HAP-1 (cell line): ENCODE measurements at regions of chr14 and their contacts with region 1.

Region 1: DNA sequence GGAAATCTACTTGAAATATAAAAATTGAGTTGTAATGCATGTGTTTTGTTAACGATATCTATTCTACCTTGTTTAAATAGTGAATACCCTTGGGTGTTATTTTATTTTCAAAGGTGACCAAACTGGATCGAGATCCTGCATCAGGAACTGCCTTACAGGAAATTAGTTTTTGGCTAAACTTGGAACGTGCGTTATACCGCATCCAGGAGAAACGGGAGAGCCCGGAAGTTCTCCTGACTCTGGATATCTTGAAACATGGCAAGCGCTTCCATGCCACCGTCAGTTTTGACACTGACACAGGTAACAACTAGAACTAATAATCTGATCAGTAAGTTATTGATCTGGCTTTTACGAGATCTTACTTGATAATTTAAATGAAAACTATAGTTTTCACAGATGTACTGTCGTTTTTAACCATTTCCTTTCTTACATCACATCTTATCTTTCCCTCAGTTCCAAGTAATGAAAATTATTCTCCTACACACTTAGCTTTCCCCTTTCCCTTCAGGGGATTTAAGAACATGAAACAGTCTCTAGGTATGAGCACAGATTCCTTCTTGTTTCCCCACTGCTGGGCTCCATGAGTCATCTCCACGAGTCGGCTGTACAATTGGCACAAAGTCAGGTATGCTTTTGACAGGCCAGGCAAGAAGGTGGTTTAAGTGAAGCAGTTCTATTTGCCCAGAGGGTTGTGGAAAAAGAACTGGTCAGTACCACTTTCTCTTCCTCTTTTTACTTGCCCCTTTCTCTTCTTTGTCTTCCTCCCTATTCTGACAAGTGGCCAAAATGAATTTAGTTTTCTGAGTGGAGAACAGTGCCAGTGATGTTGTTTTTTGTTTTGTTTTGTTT is 16.1 kb downstream of the DYNC1H1 start:
- DNase-seq: no peak
- H3K4me3 ChIP-seq: no peak overlapping the region
- H3K4me1 ChIP-seq: peaks cover 14% of the 10 kb centered on the region
- H3K27me3 ChIP-seq: no peaks in the 10 kb centered on the region

Region 2: DNA sequence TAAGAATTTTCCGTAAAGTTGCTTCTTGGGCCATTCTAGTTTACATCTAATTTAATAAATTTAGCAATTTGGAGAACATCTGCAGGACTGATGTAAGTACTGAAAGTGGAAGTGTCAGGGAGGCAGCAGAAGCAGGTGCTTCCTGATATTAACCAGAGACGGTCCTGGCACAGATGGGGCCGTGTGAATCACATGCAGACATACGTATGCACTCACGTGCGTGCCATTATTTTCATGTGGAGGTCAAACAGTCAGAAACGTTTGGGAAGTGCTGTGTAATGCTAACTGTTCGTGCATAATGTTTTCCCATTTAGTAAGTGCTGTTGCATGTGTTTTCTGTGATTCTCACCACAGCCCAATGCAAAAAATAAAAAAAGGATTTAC is 103.9 kb before region 1 on chr14:
- in situ Hi-C with region 1: no loop called
- DNase-seq: no peak
- H3K4me3 ChIP-seq: no peak overlapping the region
- H3K4me1 ChIP-seq: no peaks in the 10 kb centered on the region
- H3K27me3 ChIP-seq: no peaks in the 10 kb centered on the region

Region 3: GRCh38 chr14:102015045-102015685 is 34.7 kb after region 1 on chr14:
- in situ Hi-C with region 1: loop called (anchors 5 kb)
- DNase-seq: no peak
- H3K4me3 ChIP-seq: no peak overlapping the region
- H3K4me1 ChIP-seq: no peaks in the 10 kb centered on the region
- H3K27me3 ChIP-seq: no peaks in the 10 kb centered on the region